Activated naive CD8-positive, alpha-beta T cell treated with anti-CD3 and anti-CD28 coated beads, Interleukin-2, amount 10 ng/mL, durations not matched to agents 7 days and 5 days (primary cell): ENCODE measurements at regions of chr1 and their contacts with region 1.

Region 1: DNA sequence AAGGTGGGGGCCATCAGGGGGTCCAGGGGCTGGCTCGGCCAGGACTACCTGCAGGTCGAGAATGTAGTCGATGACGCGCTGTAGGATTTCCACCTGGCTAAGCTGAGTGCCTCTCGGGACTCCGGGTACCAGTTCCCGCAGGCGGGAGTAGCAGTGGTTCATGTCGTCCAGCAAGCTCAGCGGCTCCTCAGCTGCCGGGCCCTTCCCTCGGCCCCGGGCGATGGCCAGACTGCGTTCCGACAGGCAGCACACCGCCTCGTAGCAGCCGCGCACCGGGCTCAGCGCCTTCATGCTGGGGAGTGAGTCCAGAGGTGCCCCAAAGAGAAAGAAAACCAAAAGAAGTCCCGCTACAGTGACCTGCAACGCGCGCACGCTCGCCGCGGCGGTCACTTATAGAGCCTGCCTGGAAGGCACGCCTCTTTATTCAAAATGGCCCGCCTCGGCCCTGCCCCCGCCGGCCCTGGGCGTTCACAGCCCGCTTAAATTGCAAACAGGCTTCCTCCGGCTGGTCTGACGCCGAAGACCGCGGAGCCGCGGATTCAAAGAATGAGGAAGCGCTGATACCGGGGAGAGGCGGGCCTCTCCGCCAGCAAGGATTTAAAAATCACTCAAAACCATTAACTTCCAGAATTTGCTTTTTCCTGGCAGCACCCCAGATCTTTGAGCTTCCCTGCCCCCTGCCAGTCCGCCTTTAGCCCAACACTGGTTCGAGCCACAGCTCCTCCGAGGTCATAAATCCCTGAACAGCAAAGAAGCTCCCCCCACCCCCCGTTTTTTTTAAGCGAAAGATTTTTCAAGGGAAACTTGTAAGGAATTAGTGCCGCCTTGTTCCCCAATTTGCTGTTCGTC is at the start of gene ID3:
- DNase-seq: peak; percentile 91
- ATAC-seq: peak; percentile 72
- H3K4me3 Mint-ChIP-seq: peak within 1 kb of the TSS; percentile 84
- H3K27ac Mint-ChIP-seq: peak within 1 kb of the TSS; percentile 85
- H3K4me1 Mint-ChIP-seq: peaks cover 54% of the 10 kb centered on the region
- H3K27me3 Mint-ChIP-seq: peaks cover 21% of the 10 kb centered on the region
- total RNA-seq, gene ID3: 44.0 to 51.1 TPM

Region 2: GRCh38 chr1:23539698-23540266 is 19.6 kb before region 1 on chr1:
- POLR2A ChIA-PET with region 1: interaction called, 23 read pairs
- DNase-seq: peak; percentile 89
- ATAC-seq: peak; percentile 97
- H3K4me3 Mint-ChIP-seq: peak overlapping the region; percentile 63
- H3K27ac Mint-ChIP-seq: peak overlapping the region; percentile 87
- H3K4me1 Mint-ChIP-seq: peaks cover 14% of the 10 kb centered on the region
- H3K27me3 Mint-ChIP-seq: peaks cover 1% of the 10 kb centered on the region

Region 3: GRCh38 chr1:23591460-23592208 is 32.3 kb after region 1 on chr1:
- POLR2A ChIA-PET with region 1: interaction called, 141 read pairs
- DNase-seq: peak; percentile 66
- ATAC-seq: peak; percentile 81
- H3K4me3 Mint-ChIP-seq: peak overlapping the region; percentile 62
- H3K27ac Mint-ChIP-seq: peak overlapping the region; percentile 92
- H3K4me1 Mint-ChIP-seq: peaks cover 60% of the 10 kb centered on the region
- H3K27me3 Mint-ChIP-seq: no peaks in the 10 kb centered on the region

Region 4: DNA sequence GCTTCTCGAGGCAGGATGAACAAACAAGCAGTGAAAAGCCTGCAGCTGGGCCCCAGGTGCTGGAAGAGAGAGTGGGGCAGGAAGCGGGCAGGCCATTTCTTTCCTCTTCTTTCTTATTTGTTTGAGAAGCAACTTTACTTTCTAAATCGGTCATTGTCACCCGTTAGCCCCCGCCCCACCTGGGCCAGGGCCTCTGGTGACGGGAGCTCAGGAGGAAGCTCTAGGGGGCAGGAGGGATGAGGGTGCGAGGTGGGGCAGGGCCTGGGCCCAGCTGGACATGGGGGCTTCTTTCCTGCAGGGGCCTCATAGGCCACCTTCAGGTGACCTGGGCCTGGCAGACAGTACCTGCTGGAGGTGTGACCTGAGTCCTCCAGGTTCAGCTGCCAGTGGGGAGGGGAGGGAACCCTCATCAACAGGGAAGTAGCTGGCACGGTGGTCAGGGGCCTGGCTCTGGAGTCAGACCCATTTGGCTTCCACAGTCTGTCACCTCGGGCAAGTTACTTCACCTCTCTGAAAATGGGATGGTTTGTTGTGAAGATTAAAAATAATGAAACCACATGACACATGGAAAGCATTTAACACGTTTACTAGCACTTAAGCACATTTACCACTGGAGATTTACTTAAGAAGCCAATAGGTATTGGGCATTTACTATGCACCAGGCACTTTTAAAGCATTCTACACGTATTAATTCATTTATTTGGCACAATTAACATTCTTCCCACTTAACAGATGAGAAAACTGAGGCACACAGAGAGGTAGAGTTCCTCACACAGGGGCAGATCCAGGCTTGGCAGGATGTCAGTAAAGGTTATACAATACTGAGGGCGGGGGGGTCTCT is 54.1 kb after region 1 on chr1:
- POLR2A ChIA-PET with region 1: interaction called, 49 read pairs
- DNase-seq: peak; percentile 68
- ATAC-seq: peak; percentile 72
- H3K4me3 Mint-ChIP-seq: peak overlapping the region; percentile 60
- H3K27ac Mint-ChIP-seq: peak overlapping the region; percentile 98
- H3K4me1 Mint-ChIP-seq: peaks cover 55% of the 10 kb centered on the region
- H3K27me3 Mint-ChIP-seq: no peaks in the 10 kb centered on the region

Region 5: DNA sequence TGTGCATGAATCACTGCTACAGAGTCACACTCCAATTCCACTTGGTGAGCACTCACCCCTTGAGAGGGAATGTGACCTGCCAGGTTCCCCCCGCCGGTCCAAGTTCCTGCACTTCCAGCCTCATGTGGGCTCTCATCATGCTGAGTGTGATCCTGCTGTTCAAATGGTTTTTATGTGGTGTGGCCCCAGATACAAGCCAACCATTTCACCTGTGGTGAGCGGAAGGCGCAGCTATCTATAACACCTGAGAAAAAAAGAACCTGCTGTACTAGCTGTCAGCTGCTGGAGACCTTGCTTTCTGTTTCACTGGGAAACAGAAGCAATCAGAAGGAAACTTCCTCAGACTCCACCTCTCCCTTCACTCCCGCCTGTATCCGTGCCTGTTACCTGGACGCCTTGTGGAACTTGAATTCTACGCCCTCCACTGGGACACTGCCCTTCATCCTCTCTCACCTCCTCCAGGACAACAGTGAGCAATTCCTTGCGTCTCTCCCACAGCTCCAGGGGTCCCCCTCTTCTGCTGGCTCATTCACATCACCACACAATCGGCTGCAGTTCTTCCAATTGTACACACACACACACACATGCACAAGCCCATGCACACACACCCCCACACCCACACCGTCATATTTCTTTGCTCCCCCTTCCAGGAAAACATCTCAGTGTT is 67.8 kb after region 1 on chr1:
- POLR2A ChIA-PET with region 1: interaction called, 16 read pairs
- DNase-seq: no peak
- ATAC-seq: peak; percentile 48
- H3K4me3 Mint-ChIP-seq: peak overlapping the region; percentile 81
- H3K27ac Mint-ChIP-seq: peak overlapping the region; percentile 80
- H3K4me1 Mint-ChIP-seq: peaks cover 36% of the 10 kb centered on the region
- H3K27me3 Mint-ChIP-seq: no peaks in the 10 kb centered on the region

Region 6: DNA sequence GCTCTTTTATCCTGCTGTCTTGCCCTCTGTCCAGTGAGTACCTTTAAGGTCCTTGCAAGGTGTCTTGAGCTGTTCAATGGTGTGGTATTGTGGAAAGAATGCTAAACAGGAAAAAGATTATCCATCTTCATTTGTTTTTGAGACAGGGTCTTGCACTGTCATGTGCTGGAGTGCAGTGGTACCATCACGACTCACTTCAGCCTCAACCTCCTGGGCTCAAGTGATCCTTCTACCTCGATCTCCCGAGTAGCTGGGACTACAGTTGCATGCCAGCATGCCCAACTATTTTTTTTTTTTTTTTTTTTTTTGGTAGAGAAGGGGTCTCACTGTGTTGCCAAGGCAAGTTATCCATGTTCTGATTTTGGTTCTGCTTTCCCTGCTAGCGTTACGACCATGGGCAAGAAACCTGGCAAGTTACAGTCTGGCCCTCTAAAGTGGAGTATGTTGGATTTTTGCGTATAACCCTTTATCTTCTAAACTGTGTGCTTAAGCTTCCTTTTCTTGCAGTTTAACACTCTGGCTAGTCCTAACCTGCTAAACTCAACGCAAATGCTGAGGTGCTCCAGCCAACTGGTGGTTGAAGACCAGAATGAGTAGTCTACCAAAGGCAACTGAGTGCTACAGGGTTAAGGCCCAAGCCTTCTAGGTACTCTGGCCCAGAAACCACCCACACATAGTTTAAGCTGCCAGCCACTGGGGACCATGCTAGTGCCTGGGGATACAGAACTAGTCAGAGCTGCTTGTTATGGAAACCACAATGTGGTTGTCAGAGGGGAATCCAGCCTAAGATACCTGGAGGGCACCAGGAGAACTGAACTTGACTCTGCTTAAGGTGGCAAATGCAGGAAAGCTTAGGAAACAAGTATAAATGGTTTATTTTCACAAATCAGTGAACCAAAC is 140.2 kb after region 1 on chr1:
- POLR2A ChIA-PET with region 1: no interaction called
- DNase-seq: no peak
- ATAC-seq: no peak
- H3K4me3 Mint-ChIP-seq: no peak overlapping the region
- H3K27ac Mint-ChIP-seq: no peak overlapping the region
- H3K4me1 Mint-ChIP-seq: peaks cover 41% of the 10 kb centered on the region
- H3K27me3 Mint-ChIP-seq: no peaks in the 10 kb centered on the region